Lower leg skin (tissue), 4 donors: ENCODE measurements at regions of chr3 and their contacts with region 1.

Region 1: DNA sequence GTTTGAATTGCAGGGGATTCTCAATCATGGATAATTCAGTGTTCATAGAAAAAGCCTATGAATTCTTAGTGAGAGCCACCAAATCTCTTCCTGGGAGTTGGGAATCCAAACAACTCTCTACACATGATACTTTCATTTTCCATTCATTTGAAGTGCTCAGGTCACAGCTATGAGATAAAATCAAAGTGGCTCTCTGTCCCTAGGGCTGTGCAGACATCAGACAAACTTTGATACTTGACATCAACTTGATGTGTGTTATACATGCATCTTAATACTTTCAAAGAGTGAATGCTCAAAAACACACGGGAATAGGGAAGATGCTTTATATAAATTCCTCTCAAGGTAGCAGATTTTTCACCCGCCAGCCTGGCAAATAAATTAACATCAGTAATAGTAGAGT is 75.3 kb upstream of the CHMP2B start:
- DNase-seq: no peak
- H3K4me3 ChIP-seq: no peak overlapping the region
- CTCF ChIP-seq: no peak
- POLR2A ChIP-seq: no peak

Region 2: DNA sequence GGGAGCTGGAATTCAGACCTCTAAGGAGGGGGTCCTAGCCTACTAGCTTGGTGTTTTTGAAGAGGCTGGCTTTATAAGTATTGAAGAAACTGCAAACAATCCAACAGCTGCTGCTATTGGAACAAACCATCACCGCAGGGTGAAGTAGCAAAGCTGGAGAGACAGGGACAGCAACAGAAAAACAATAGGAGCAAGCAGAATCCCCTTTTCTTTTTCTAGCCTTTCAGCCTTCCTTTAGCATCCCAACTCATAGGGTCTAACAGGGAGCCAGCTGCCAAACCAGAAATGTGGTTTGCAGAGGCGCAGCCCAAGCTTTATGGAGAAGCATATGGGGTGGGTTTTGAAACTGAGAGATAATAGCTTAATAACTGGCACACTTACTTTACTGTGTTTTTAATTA is 30.9 kb before region 1 on chr3:
- intact Hi-C with region 1: loop called (anchors 2 kb)
- DNase-seq: no peak
- H3K4me3 ChIP-seq: no peak overlapping the region
- CTCF ChIP-seq: no peak
- POLR2A ChIP-seq: no peak

Region 3: GRCh38 chr3:87287011-87287410 is 135.2 kb after region 1 on chr3:
- intact Hi-C with region 1: no loop called
- DNase-seq: no peak
- H3K4me3 ChIP-seq: no peak overlapping the region
- CTCF ChIP-seq: no peak
- POLR2A ChIP-seq: no peak